ENCODE measurements at regions of chr12 and their contacts with region 1.

Region 1: GRCh38 chr12:22880807-22881206 is 255.8 kb downstream of the ETNK1 start:
- DNase-seq: no peak
- H3K4me3 ChIP-seq: no peak overlapping the region
- H3K27ac ChIP-seq: no peak overlapping the region
- H3K4me1 ChIP-seq: no peaks in the 10 kb centered on the region
- H3K27me3 ChIP-seq: no peaks in the 10 kb centered on the region
- CTCF ChIP-seq: no peak

Region 2: DNA sequence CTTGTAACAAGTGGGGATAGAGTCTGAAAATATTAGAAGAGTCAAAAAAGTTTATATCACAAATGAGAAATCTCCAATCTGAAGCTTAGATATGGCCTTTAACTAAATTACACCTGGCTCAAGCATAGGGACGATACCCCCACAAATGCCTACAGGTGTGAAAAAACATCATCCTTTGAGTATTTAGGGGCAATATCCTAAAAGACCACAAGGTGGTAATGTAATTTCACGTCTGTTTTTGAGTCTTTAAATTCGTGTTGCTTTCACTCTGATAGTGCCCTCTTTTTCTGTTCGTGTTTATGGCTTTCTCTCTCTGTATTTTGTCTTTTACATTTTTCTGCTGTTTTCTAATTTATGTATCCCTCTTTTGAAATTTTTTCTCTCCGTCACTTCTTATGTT is 171.5 kb before region 1 on chr12:
- intact Hi-C with region 1: no loop called
- DNase-seq: no peak
- H3K4me3 ChIP-seq: peak overlapping the region; percentile 14 to 16
- H3K27ac ChIP-seq: peak overlapping the region in 1 of 2 donors; percentile 21
- H3K4me1 ChIP-seq: peaks cover 0 to 5% (median 2%) of the 10 kb centered on the region in 4 donors
- H3K27me3 ChIP-seq: no peaks in the 10 kb centered on the region
- CTCF ChIP-seq: peak; percentile 74 to 90

Region 3: GRCh38 chr12:22923768-22924365 is 43.1 kb after region 1 on chr12:
- intact Hi-C with region 1: no loop called
- DNase-seq: no peak
- H3K4me3 ChIP-seq: no peak overlapping the region
- H3K27ac ChIP-seq: no peak overlapping the region
- H3K4me1 ChIP-seq: no peaks in the 10 kb centered on the region
- H3K27me3 ChIP-seq: no peaks in the 10 kb centered on the region
- CTCF ChIP-seq: no peak

Region 4: DNA sequence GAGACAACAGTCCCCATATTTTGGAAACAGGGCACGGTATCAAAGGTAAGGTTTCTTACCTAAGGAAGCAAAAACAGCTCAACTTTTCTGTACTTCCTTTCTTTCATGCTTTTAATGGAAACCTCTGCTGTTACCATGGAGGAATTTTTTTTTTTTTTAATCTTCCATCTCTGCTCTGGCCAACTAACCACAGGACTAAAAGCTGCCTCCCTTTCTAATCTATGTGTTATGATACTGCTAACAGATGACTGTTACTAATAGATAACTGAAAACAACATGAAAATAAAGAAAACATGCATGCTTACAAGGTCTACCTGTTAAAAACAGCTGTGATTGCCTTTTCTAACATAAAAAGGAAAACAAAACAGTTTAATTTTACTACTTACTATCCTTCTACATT is 900.3 kb after region 1 on chr12:
- intact Hi-C with region 1: loop called (anchors 5 kb)
- DNase-seq: no peak
- H3K4me3 ChIP-seq: no peak overlapping the region
- H3K27ac ChIP-seq: no peak overlapping the region
- H3K4me1 ChIP-seq: no peaks in the 10 kb centered on the region
- H3K27me3 ChIP-seq: no peaks in the 10 kb centered on the region
- CTCF ChIP-seq: no peak